Prostate gland (tissue), 2 donors: ENCODE measurements at regions of chr2 and their contacts with region 1.

Region 1: DNA sequence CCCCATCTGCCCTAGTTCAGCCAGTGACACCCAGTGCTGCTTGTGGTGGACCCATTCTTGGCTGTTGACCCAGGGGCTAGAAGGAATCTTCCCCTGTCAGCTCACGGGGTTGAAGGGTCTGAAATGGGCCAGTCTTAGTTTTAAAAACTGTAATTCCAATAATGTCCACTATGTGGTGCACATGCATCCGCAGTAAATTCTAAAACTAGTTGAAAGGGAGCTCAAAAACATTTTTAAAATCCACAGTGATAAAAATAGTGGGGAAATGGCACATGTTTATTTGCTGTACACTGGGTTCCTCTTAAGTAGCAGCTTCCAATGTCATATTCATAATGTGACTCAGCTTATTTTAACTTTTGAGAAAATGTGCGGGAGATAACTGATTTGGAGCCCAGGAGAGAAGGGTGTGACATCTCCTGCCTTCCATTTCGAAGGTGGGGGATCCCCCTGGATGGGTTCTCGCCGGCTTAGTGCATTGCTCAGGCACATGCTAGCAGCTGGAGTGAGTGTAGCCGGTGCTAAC is 32.8 kb downstream of the GRHL1 start:
- DNase-seq: no peak
- H3K4me3 ChIP-seq: no peak overlapping the region
- H3K27ac ChIP-seq: peak overlapping the region; percentile 16 to 35
- H3K4me1 ChIP-seq: no peaks in the 10 kb centered on the region
- H3K27me3 ChIP-seq: no peaks in the 10 kb centered on the region
- CTCF ChIP-seq: peak; percentile 66 to 83 (median 72)
- POLR2A ChIP-seq: no peak

Region 2: GRCh38 chr2:9813312-9814133 is 170.8 kb before region 1 on chr2:
- intact Hi-C with region 1: loop called (anchors 10 kb)
- DNase-seq: peak; percentile 69
- H3K4me3 ChIP-seq: no peak overlapping the region
- H3K27ac ChIP-seq: no peak overlapping the region
- H3K4me1 ChIP-seq: peaks cover 4% of the 10 kb centered on the region
- H3K27me3 ChIP-seq: no peaks in the 10 kb centered on the region
- CTCF ChIP-seq: peak; percentile 62 to 95 (median 92)
- POLR2A ChIP-seq: no peak